ENCODE measurements at regions of chr9 and their contacts with region 1.

Region 1: DNA sequence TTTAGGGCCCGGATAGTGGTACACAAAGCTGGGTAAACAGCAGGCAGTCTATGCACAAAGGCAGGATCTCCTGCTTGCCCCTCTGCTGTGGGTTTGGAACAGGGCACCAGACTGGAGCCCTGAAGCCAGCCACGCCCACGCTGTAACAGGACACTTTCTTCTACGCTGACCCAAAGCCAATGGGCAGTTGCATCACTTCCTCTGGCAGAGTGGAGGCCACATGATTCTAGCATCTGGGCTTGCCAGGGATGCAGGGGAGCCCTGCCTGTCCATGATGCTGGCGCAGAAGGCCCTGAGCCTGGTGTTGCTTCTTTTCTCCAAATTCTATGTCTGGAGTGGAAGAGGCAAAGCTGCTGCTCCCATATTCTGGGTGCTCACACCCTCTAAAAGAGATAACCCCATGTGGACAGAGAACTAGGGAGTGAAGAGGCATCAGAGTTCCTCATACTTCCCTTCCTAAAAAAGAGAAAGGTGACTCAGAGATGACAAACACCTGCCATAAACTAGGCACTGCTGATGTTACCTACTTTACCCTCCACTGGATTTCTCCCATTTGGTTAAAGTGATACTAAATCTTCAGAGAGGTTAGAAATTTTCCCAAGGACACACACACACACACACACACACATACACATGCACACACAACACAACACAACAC is 260.3 kb upstream of the KLF4 start:
- DNase-seq: peak; percentile 18 to 92 (median 87)
- H3K4me3 ChIP-seq: peak overlapping the region in 1 of 59 donors; percentile 21
- H3K27ac ChIP-seq: peak overlapping the region; percentile 77 to 97 (median 90)
- H3K27me3 ChIP-seq: no peaks in the 10 kb centered on the region
- CTCF ChIP-seq: peak in 1 of 56 donors; percentile 11

Region 2: DNA sequence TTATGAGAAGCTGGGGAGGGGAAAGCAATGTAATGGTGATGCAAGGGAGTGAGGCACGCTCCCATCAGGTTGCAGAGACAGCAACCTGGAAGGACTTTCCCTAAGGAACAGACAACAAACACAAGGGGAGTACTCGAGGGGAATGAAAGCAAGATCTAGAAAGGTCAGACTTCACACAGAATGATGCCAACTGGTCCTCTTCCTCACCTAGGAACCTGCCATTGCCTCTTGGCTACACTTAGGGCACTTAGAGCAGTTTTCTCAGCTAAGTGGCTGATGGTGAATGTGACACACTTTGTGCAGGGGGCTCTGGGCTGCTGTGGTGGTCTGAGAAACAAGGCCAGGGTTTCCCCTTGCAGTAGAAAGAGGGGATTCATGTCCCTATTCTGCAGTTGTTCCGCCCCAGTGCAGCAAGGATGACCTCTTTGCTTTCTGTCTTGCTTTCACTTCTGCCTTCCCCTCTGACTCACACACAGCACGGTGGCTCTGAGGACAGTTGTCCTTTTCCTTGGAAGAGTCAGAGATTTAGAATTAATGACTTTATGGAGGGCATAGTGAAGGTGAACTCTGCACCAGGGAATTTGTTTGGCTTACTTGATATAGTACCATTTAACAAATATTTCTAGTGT is 133.7 kb after region 1 on chr9:
- intact Hi-C with region 1: no loop called
- DNase-seq: no peak
- H3K4me3 ChIP-seq: no peak overlapping the region
- H3K27ac ChIP-seq: no peak overlapping the region
- H3K27me3 ChIP-seq: no peaks in the 10 kb centered on the region
- CTCF ChIP-seq: no peak

Region 3: GRCh38 chr9:107919263-107919662 is 169.3 kb after region 1 on chr9:
- intact Hi-C with region 1: loop called in 1 of 2 experiments (anchors 5 kb)
- DNase-seq: peak in 1 of 10 donors; percentile 9
- H3K4me3 ChIP-seq: peak overlapping the region in 4 of 59 donors; percentile 0 to 20 (median 16)
- H3K27ac ChIP-seq: peak overlapping the region in 44 of 59 donors; percentile 8 to 84 (median 51)
- H3K27me3 ChIP-seq: peaks cover 0 to 2% (median 0%) of the 10 kb centered on the region in 45 donors
- CTCF ChIP-seq: peak in 5 of 56 donors; percentile 13 to 38 (median 18)

Region 4: GRCh38 chr9:108125625-108126024 is 375.7 kb after region 1 on chr9:
- intact Hi-C with region 1: no loop called
- DNase-seq: no peak
- H3K4me3 ChIP-seq: no peak overlapping the region
- H3K27ac ChIP-seq: no peak overlapping the region
- H3K27me3 ChIP-seq: no peaks in the 10 kb centered on the region
- CTCF ChIP-seq: peak in 26 of 56 donors; percentile 14 to 35 (median 20)

Region 5: GRCh38 chr9:108272349-108272899 is 522.5 kb after region 1 on chr9:
- intact Hi-C with region 1: loop called in 1 of 2 experiments (anchors 10 kb)
- DNase-seq: peak in 9 of 10 donors; percentile 4 to 59 (median 42)
- H3K4me3 ChIP-seq: peak overlapping the region in 32 of 59 donors; percentile 1 to 43 (median 22)
- H3K27ac ChIP-seq: peak overlapping the region in 9 of 59 donors; percentile 6 to 49 (median 25)
- H3K27me3 ChIP-seq: no peaks in the 10 kb centered on the region
- CTCF ChIP-seq: peak; percentile 35 to 83 (median 66)